ENCODE measurements at regions of chr5 and their contacts with region 1.

Region 1: GRCh38 chr5:176415952-176416924 is at the start of gene CLTB:
- DNase-seq: peak; percentile 86 to 93 (median 87)
- H3K4me3 ChIP-seq: peak within 1 kb of the TSS; percentile 65 to 92 (median 76)
- H3K4me3 Mint-ChIP-seq: peak within 1 kb of the TSS; percentile 79 to 87
- H3K27ac ChIP-seq: peak within 1 kb of the TSS; percentile 20 to 85
- H3K27ac Mint-ChIP-seq: peak within 1 kb of the TSS; percentile 57 to 89 (median 72)
- H3K4me1 ChIP-seq: peaks cover 16 to 23% of the 10 kb centered on the region in 2 donors
- H3K4me1 Mint-ChIP-seq: peaks cover 44% of the 10 kb centered on the region
- H3K27me3 ChIP-seq: no peaks in the 10 kb centered on the region
- H3K27me3 Mint-ChIP-seq: peaks cover 2 to 5% (median 2%) of the 10 kb centered on the region in 3 donors
- CTCF ChIP-seq: peak; percentile 78
- polyA plus RNA-seq, gene CLTB: 63.2 to 87.6 (median 75.2) TPM

Region 2: GRCh38 chr5:176447982-176448608 is 31.9 kb after region 1 on chr5 and contains the start of gene FAF2:
- intact Hi-C with region 1: loop called (anchors 2 kb)
- DNase-seq: peak; percentile 95 to 97 (median 96)
- H3K4me3 ChIP-seq: peak within 1 kb of the TSS; percentile 84 to 98 (median 97)
- H3K4me3 Mint-ChIP-seq: peak within 1 kb of the TSS; percentile 95 to 99
- H3K27ac ChIP-seq: peak within 1 kb of the TSS; percentile 99 to 100
- H3K27ac Mint-ChIP-seq: peak within 1 kb of the TSS; percentile 99 to 100 (median 100)
- H3K4me1 ChIP-seq: peaks cover 24 to 25% of the 10 kb centered on the region in 2 donors
- H3K4me1 Mint-ChIP-seq: peaks cover 23% of the 10 kb centered on the region
- H3K27me3 ChIP-seq: no peaks in the 10 kb centered on the region
- H3K27me3 Mint-ChIP-seq: peaks cover 0 to 4% (median 0%) of the 10 kb centered on the region in 3 donors
- CTCF ChIP-seq: peak; percentile 96
- polyA plus RNA-seq, gene FAF2: 11.5 to 14.8 (median 12.2) TPM

Region 3: GRCh38 chr5:176573564-176574296 is 157.5 kb after region 1 on chr5:
- intact Hi-C with region 1: loop called in 1 of 2 experiments (anchors 5 kb)
- DNase-seq: peak; percentile 48 to 62 (median 61)
- H3K4me3 ChIP-seq: no peak overlapping the region
- H3K4me3 Mint-ChIP-seq: no peak overlapping the region
- H3K27ac ChIP-seq: no peak overlapping the region
- H3K27ac Mint-ChIP-seq: no peak overlapping the region
- H3K4me1 ChIP-seq: no peaks in the 10 kb centered on the region
- H3K4me1 Mint-ChIP-seq: peaks cover 5% of the 10 kb centered on the region
- H3K27me3 ChIP-seq: no peaks in the 10 kb centered on the region
- H3K27me3 Mint-ChIP-seq: peaks cover 4 to 12% (median 12%) of the 10 kb centered on the region in 3 donors
- CTCF ChIP-seq: peak; percentile 95

Region 4: GRCh38 chr5:178130604-178131485 is 1714.6 kb after region 1 on chr5 and contains the start of gene RMND5B:
- intact Hi-C with region 1: loop called in 1 of 2 experiments (anchors 10 kb)
- DNase-seq: peak; percentile 67 to 78 (median 76)
- H3K4me3 ChIP-seq: peak within 1 kb of the TSS; percentile 88 to 97 (median 92)
- H3K4me3 Mint-ChIP-seq: peak within 1 kb of the TSS; percentile 89 to 94
- H3K27ac ChIP-seq: peak within 1 kb of the TSS; percentile 16 to 67
- H3K27ac Mint-ChIP-seq: peak within 1 kb of the TSS in 5 of 7 donors; percentile 41 to 60 (median 54)
- H3K4me1 ChIP-seq: peaks cover 13 to 20% of the 10 kb centered on the region in 2 donors
- H3K4me1 Mint-ChIP-seq: peaks cover 21% of the 10 kb centered on the region
- H3K27me3 ChIP-seq: peaks cover 0 to 5% of the 10 kb centered on the region in 2 donors
- H3K27me3 Mint-ChIP-seq: peaks cover 6 to 28% (median 13%) of the 10 kb centered on the region in 3 donors
- CTCF ChIP-seq: no peak
- polyA plus RNA-seq, gene RMND5B: 20.9 to 27.4 (median 23.9) TPM

Measured in CD14-positive monocyte (primary cell).